IMR-90 (cell line): ENCODE measurements at regions of chr1 and their contacts with region 1.

Region 1: GRCh38 chr1:98975113-98975512 is 29.5 kb downstream of the PLPPR5 start:
- DNase-seq: no peak
- ATAC-seq: no peak
- H3K4me3 ChIP-seq: no peak overlapping the region
- H3K27ac ChIP-seq: no peak overlapping the region
- H3K4me1 ChIP-seq: no peaks in the 10 kb centered on the region; the same call in 1 of the 2 replicates
- H3K27me3 ChIP-seq: no peaks in the 10 kb centered on the region; the same call in 1 of the 2 replicates
- CTCF ChIP-seq: no peak
- POLR2A ChIP-seq: no peak
- RAD21 ChIP-seq: no peak

Region 2: DNA sequence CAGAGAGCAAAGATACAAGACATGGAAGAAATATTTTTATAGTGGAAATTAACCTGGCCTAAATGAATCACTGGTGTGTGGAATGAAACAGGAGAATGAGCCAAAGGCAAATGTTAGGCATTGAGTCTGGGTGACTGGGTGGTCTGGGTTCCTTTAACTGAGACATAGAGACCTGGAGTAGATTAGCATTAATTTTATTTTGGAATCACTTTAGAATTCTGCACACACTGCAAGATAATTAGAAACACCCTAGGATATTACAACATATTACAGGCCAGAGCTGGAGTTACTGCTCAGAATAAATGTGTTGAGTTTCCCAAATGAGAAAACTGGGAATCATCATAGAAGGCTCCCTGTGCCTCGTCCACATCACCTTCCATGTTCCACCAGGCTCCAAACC is 55.9 kb before region 1 on chr1:
- CTCF ChIA-PET with region 1: no interaction called
- POLR2A ChIA-PET with region 1: no interaction called
- dilution Hi-C with region 1: no loop called
- in situ Hi-C with region 1: loop called (anchors 10 kb)
- intact Hi-C with region 1: no loop called
- DNase-seq: no peak
- ATAC-seq: no peak
- H3K4me3 ChIP-seq: no peak overlapping the region
- H3K27ac ChIP-seq: no peak overlapping the region
- H3K4me1 ChIP-seq: peaks cover 2% of the 10 kb centered on the region; the same call in 1 of the 2 replicates
- H3K27me3 ChIP-seq: no peaks in the 10 kb centered on the region
- CTCF ChIP-seq: no peak
- POLR2A ChIP-seq: no peak
- RAD21 ChIP-seq: no peak

Region 3: GRCh38 chr1:99481391-99481996 is 506.4 kb after region 1 on chr1:
- CTCF ChIA-PET with region 1: no interaction called
- POLR2A ChIA-PET with region 1: no interaction called
- dilution Hi-C with region 1: no loop called
- in situ Hi-C with region 1: no loop called
- intact Hi-C with region 1: no loop called
- DNase-seq: peak; percentile 68
- ATAC-seq: peak; percentile 71; the same call in 1 of the 2 replicates
- H3K4me3 ChIP-seq: no peak overlapping the region
- H3K27ac ChIP-seq: no peak overlapping the region
- H3K4me1 ChIP-seq: no peaks in the 10 kb centered on the region
- H3K27me3 ChIP-seq: no peaks in the 10 kb centered on the region
- CTCF ChIP-seq: peak; percentile 83
- POLR2A ChIP-seq: no peak
- RAD21 ChIP-seq: peak; percentile 88